ENCODE measurements at regions of chr16 and their contacts with region 1.

Region 1: DNA sequence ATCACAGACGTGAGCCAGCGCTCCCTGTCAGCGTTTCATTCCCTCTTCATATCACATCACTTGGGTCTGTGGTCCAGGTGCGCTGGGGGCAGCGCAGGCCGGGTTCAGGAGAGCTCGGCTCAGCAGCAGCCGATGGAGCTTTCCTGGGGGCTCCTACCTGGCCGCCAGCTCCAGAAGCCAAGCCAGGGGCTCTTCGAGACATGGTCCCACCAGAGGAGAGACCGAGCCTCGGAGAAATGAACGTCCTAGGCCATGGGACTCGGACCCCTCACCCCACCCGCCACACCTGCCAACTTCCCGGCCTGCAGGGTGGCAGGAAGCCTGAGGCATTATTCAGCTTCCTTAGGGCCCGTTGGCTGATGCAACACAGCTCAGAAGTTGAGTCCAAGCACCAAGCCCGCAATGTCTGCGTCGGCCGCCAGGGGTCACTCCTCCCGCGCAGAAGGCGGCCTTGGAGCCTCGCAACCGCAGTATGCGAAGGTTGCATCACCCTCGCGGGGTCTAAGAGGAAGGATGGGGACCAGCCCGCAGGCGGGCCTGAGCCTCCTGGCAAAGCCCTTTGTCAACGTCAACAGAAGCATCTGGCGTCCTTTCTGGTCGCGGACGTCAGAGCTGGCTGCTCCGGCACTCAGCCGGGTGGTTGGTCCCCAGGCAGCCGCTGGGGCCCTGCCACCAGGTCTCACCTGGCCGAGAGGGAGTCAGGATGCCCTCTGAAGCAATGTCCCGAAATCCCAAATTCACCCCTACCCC is 13.2 kb upstream of the KLHDC4 start:
- DNase-seq: peak; percentile 87
- H3K4me3 ChIP-seq: no peak overlapping the region
- H3K27me3 ChIP-seq: no peaks in the 10 kb centered on the region
- CTCF ChIP-seq: peak; percentile 98

Region 2: DNA sequence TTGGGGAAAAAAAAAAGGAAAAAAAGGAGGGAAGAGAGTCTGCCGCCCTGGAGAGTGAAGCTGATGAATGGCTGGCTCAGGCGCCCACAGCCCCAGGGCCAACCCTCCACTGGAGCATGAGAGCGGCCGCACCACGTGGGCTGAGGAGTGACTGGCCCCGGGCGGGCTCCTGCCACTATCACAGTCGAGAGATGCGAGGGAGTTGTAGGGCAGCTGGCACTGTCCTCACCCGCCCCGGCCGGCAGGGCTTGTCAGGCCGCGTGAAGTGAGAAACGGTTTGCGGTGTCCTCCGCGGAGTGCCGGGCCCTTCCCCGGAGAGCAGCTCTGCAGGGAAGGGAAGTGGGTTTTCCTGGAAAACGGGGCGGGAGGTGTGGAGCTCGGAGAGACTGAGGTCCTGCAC is 130.8 kb before region 1 on chr16:
- CTCF ChIA-PET with region 1: no interaction called
- POLR2A ChIA-PET with region 1: no interaction called
- DNase-seq: no peak
- H3K4me3 ChIP-seq: no peak overlapping the region
- H3K27me3 ChIP-seq: peaks cover 7% of the 10 kb centered on the region
- CTCF ChIP-seq: no peak

Region 3: DNA sequence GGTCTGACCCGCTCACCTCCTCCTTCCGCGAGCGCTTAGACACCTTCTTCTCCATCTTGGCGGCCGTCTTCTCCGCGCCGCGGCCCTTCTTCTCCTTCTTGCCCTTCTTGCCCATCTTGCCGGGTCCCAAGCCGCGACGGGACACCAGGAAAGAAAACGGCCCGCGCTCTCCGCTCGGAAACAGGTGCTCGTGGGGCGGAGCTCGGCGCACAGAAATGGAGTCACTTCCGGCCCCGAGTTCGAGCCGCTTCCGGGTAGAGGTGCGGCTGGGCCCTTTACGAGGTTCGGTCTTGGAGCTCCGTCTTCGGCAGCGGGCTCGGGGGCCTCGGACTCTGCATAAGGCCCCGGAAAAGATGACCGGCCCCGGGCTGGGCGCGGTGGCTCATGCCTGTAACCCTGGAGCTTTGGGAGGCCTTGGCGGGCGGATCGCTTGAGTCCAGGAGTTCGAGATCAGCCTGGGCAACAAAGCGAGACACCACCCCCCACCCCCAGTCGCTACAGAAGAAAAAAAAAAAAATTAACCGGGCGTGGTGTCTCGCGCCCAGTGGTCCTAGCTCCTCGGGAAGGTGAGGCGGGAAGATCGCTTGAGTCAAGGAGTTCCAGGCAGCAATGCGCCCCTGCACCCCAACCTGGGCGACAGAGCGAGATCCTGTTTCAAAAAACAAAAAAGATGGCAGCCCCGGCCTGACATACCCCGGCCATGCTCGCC is 13.1 kb before region 1 on chr16 and contains the start of gene KLHDC4:
- CTCF ChIA-PET with region 1: interaction called, 16 read pairs
- POLR2A ChIA-PET with region 1: no interaction called
- DNase-seq: peak; percentile 31
- H3K4me3 ChIP-seq: peak within 1 kb of the TSS; percentile 95
- H3K27me3 ChIP-seq: no peaks in the 10 kb centered on the region
- CTCF ChIP-seq: no peak
- polyA plus RNA-seq, gene KLHDC4: 12.3 and 16.1 TPM in 2 replicates

Region 4: DNA sequence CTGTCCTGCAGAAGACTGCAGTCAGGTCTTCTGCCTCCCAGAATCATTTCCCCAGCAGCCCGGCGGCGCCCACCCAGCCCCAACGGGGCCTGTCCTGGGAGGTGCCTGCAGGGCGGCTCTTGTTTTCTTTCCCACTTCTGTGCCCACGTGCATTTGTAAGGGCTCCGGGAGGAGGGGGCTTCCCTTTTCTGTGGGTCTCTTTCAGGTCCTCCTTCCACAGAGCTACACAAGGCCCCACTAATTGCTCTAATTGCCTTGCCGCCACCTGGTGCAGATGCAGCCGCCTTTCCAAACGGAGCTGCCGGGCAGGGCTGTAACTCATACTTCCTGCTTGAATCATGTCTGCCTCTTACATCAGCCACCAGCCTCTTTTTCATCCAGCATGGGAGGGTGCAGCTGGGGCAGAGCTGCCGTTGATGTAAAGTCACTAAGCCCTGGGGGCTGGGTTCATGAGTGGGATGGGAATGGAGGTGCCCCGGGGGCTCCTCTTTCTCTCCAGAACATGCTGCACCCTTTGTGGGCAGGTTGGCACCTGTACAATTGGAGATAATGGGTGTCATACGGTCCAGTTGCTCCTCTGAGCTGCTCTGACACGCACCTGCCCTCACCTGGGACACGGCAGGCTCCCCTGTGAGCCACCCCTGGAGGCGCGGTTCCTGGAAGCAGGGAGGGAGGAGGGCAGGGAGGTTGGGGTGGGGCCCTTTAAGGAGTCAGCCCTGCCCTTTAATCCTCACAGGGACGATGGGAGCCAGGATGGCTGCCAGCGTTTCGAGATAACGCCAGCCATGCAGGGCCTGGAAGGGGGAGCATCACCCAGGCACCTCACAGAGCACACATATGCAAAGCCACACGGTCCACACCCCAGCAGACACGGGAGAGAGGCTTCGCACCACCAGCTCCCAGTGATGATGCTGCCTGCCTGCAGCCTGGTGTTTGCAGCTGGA is 27.9 kb after region 1 on chr16:
- CTCF ChIA-PET with region 1: interaction called, 10 read pairs
- POLR2A ChIA-PET with region 1: no interaction called
- DNase-seq: peak; percentile 70
- H3K4me3 ChIP-seq: peak overlapping the region; percentile 36
- H3K27me3 ChIP-seq: no peaks in the 10 kb centered on the region
- CTCF ChIP-seq: no peak

Region 5: DNA sequence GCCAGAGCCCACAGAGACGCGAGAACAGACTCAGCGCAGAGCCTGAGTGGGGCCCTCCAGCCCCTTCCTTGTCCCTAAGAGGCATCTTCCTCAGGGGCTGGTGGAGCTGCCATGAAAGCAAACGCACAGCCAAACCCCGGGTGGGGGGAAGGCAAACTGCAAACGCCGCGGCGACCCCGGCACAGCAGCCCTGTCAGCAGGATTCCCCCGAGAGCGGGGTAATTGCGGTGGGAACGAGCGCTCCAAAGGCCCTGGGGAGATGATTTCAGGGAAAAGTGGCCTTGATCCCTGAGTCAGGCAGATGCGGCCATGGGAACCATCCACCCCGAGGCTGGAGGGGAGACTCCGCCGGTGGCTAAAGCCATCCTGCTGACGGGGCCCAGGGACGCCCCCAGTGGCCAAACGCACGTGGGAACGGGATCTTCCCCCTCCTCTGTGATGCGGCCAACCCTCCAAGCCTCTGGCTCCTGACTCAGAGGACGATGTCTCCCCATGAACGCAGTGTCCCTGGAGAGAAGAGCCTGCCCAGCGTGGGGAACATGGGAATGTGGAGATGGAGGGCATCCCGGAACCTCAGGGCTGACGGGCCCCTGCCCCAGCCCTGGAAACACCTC is 65.2 kb after region 1 on chr16:
- CTCF ChIA-PET with region 1: interaction called, 44 read pairs
- POLR2A ChIA-PET with region 1: no interaction called
- DNase-seq: no peak
- H3K4me3 ChIP-seq: no peak overlapping the region
- H3K27me3 ChIP-seq: no peaks in the 10 kb centered on the region
- CTCF ChIP-seq: no peak

Region 6: DNA sequence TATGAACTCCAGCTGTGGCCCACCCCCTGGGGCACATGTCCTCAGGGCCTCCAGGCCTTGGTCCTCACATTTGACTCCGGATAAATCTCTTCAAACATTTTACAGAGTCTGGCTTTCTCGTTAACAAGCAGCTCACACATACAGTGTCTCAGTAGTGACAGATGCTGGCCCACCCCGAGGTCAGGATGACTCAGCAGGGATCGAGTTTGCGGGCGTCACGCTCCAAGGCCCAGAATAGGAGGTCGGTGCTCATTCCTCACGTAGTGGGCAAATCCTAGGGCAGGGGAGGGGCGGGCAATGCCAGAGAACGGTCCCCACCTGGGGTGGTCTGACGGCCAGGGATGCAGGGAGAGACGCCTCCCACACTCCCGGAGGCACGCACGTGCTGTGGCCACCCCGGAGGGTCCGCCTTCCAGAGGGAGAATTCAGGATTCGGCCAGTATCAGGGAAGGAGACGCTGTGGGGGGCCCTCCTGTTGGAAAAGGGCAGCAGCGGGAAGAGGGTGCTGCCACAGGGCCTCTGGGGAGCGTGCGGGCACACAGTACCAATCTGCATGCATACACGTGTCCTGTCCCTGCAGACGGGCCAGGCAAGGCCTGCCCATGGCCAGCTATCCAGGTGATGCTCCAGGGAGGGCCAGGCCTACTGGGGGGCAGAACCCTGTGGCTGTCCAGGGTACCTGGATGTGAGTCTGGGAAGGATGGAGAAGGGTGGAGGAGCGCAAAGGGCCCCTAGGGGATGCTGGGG is 81.7 kb after region 1 on chr16:
- CTCF ChIA-PET with region 1: interaction called, 27 read pairs
- POLR2A ChIA-PET with region 1: no interaction called
- DNase-seq: peak; percentile 37
- H3K4me3 ChIP-seq: no peak overlapping the region; the same call in 1 of the 2 replicates
- H3K27me3 ChIP-seq: no peaks in the 10 kb centered on the region
- CTCF ChIP-seq: no peak

Region 7: GRCh38 chr16:87914812-87915211 is 135.8 kb after region 1 on chr16:
- CTCF ChIA-PET with region 1: interaction called, 39 read pairs
- POLR2A ChIA-PET with region 1: no interaction called
- DNase-seq: no peak
- H3K4me3 ChIP-seq: no peak overlapping the region
- H3K27me3 ChIP-seq: 0 out of 2 replicates have a peak, but pooled peaks cover under 1% of the 10 kb centered on the region
- CTCF ChIP-seq: no peak

Region 8: DNA sequence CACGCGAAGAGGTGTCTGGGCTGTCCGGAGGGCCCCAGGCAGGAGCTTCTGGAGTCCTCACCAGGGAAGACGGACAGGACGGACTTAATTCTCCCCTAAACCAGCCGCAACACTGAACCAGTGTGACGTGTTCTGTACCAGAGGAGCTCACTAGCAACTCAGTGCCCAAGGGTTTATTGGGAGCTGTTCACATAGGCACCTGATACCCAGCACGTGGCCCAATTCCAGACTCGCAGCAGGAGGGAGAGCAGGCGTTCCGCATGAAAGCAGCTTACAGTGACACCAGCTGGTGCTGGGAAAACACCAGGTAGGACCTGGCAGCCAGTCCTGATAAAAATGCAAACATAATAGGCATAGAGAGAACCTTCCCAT is 146.3 kb after region 1 on chr16:
- CTCF ChIA-PET with region 1: no interaction called
- POLR2A ChIA-PET with region 1: no interaction called
- DNase-seq: no peak
- H3K4me3 ChIP-seq: no peak overlapping the region
- H3K27me3 ChIP-seq: peaks cover 5% of the 10 kb centered on the region; the same call in 1 of the 2 replicates
- CTCF ChIP-seq: no peak

Region 9: DNA sequence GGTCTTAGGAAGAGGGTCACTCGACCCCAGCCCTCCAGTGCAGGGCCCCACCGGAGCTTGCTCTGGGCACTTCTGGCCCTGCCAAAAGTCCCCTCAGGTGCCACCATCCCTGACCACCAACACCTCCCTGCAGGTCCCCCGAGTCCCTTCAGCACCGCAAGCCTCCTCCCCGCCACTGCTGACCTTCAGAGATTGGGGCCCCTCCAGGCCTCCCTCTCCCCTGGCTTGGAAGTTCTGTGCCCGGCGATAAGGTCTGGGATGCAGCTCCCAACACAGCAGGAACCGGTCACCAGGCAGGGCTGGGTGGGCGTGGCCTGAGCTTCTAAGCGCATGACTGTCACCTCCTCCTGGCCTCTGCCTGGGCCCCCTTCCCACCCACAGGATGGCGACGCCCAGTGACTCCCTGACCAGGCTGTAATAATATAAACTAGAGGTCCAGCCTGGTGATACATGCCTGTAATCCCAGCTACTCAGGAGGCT is 994.8 kb after region 1 on chr16:
- CTCF ChIA-PET with region 1: no interaction called
- POLR2A ChIA-PET with region 1: no interaction called
- DNase-seq: peak; percentile 68
- H3K4me3 ChIP-seq: no peak overlapping the region
- H3K27me3 ChIP-seq: no peaks in the 10 kb centered on the region
- CTCF ChIP-seq: no peak